Mammary epithelial cell (primary cell): ENCODE measurements at regions of chr10 and their contacts with region 1.

Region 1: GRCh38 chr10:43689955-43690771 is 41.5 kb upstream of the ZNF32 start:
- DNase-seq: peak; percentile 59
- H3K4me3 ChIP-seq: peak overlapping the region; percentile 13 to 40 (median 36)
- H3K27ac ChIP-seq: no peak overlapping the region
- H3K4me1 ChIP-seq: peaks cover 7% of the 10 kb centered on the region
- H3K27me3 ChIP-seq: no peaks in the 10 kb centered on the region
- CTCF ChIP-seq: peak; percentile 31 to 69

Region 2: DNA sequence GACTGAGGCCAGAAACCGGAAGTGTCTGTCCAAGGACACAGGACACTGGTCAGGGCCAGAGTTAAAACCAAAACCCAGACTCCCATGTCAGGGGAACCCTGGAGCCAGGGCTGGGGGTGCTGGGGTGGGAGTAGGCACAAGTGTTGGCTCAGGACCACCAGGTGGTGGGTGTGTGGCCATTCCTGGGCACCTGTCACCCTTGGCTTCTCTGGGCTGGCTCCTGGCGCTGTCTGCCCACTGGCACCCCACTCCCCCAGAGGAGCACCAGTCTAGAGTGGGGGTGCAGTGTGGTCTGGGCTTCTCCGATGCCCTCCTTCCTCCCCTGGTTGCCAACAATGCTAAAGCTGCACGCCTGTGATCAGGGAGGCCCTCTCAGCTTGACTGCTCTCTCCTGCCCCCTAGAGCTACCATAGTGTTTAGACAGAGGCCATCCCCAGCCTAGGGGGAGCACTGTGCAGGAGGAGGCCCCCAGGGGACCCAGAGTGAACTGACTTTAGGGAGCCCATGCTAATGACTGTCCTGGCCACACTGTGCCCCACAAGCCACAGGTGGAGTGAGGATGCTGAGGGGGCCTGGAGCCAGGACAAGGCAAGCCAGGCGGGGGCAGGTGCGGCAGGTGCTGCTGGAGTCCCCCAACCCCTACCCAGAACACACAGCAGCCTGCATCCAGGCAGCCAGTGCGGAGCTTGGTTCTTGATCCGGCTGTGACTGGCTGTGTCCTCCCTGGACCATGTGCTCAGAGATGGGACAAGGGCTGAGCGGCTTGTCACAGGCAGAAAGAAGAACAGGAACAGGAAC is 434.3 kb before region 1 on chr10:
- CTCF ChIA-PET with region 1: no interaction called
- dilution Hi-C with region 1: no loop called
- in situ Hi-C with region 1: no loop called
- intact Hi-C with region 1: no loop called
- DNase-seq: no peak
- H3K4me3 ChIP-seq: no peak overlapping the region
- H3K27ac ChIP-seq: no peak overlapping the region
- H3K4me1 ChIP-seq: peaks cover 5% of the 10 kb centered on the region
- H3K27me3 ChIP-seq: peaks cover 3% of the 10 kb centered on the region
- CTCF ChIP-seq: peak; percentile 53 to 64

Region 3: GRCh38 chr10:44046605-44047004 is 356.4 kb after region 1 on chr10:
- CTCF ChIA-PET with region 1: interaction called, 4 read pairs
- dilution Hi-C with region 1: no loop called
- in situ Hi-C with region 1: no loop called
- intact Hi-C with region 1: loop called (anchors 1 kb)
- DNase-seq: peak; percentile 73
- H3K4me3 ChIP-seq: no peak overlapping the region
- H3K27ac ChIP-seq: no peak overlapping the region
- H3K4me1 ChIP-seq: no peaks in the 10 kb centered on the region
- H3K27me3 ChIP-seq: no peaks in the 10 kb centered on the region
- CTCF ChIP-seq: peak in 1 of 2 donors; percentile 23

Region 4: GRCh38 chr10:44310762-44311562 is 620.8 kb after region 1 on chr10:
- CTCF ChIA-PET with region 1: no interaction called
- dilution Hi-C with region 1: no loop called
- in situ Hi-C with region 1: no loop called
- intact Hi-C with region 1: loop called (anchors 5 kb)
- DNase-seq: peak; percentile 11
- H3K4me3 ChIP-seq: no peak overlapping the region
- H3K27ac ChIP-seq: no peak overlapping the region
- H3K4me1 ChIP-seq: no peaks in the 10 kb centered on the region
- H3K27me3 ChIP-seq: no peaks in the 10 kb centered on the region
- CTCF ChIP-seq: peak in 1 of 2 donors; percentile 9

Region 5: DNA sequence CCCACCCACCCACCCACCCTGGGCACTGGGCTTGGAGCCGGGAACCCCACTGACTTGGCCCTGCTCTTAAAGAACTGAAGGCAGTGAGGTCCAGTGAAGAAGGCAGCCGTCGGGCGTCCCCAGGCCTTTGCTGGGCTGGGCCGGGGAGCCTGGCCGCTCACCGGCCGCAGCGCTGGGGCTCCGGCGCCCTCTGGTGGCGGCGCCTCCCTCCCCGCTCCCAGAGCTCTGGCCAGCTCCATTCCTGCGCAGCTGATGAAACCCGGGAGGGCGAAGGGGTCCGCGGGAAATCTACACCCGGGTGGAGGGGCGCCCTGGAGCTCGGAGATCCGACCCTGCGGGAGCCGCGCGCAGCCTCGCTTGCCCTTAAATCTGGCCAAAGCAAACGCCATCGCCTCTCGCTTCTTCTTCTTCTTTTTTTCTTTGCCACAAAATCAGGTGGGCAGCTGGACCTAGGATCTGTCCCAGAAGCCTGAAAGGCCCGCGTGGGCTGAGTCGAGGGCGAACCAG is 696.4 kb after region 1 on chr10:
- CTCF ChIA-PET with region 1: no interaction called
- dilution Hi-C with region 1: no loop called
- in situ Hi-C with region 1: no loop called
- intact Hi-C with region 1: loop called (anchors 5 kb)
- DNase-seq: peak; percentile 14
- H3K4me3 ChIP-seq: no peak overlapping the region
- H3K27ac ChIP-seq: no peak overlapping the region
- H3K4me1 ChIP-seq: no peaks in the 10 kb centered on the region
- H3K27me3 ChIP-seq: peaks cover 7% of the 10 kb centered on the region
- CTCF ChIP-seq: peak; percentile 24 to 72

Region 6: GRCh38 chr10:44857363-44858016 is 1167.3 kb after region 1 on chr10:
- CTCF ChIA-PET with region 1: no interaction called
- dilution Hi-C with region 1: loop called (anchors 25 kb)
- in situ Hi-C with region 1: no loop called
- intact Hi-C with region 1: loop called (anchors 2 kb)
- DNase-seq: peak; percentile 14
- H3K4me3 ChIP-seq: no peak overlapping the region
- H3K27ac ChIP-seq: no peak overlapping the region
- H3K4me1 ChIP-seq: no peaks in the 10 kb centered on the region
- H3K27me3 ChIP-seq: no peaks in the 10 kb centered on the region
- CTCF ChIP-seq: peak; percentile 95 to 98

Region 7: DNA sequence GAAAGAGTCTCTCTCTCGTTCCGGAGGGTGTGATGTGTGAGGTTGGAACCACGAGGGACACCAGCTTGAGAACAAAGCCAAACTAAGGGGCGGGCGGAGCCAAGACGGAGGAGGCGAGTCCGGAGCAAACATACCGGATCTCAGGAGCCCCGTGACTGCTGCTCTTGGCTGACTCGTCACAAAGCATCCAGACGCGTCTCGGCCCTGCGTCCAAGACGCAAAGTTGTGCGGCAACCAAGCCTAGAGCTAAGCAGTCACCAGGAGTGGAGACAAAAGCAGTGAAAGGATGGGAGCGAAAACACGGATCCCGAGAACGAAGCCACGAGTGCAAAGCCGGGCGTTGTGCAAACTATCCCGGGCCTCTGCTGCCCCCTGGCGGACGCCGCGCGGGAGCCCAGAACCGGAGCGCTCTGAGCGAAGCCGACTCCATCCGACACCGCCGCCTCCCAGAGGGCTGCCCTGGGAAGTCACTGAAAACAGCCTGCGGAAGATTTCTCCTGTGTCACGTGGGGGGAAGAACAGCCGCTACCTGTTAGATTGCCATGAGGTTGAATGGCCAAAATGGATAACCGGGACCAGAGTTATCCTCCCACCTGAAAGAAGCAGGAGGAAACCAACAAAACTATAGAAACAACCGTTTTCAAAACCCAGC is 1174.6 kb after region 1 on chr10:
- CTCF ChIA-PET with region 1: no interaction called
- dilution Hi-C with region 1: loop called (anchors 25 kb)
- in situ Hi-C with region 1: no loop called
- intact Hi-C with region 1: loop called (anchors 2 kb)
- DNase-seq: peak; percentile 69
- H3K4me3 ChIP-seq: peak overlapping the region; percentile 24 to 62 (median 58)
- H3K27ac ChIP-seq: no peak overlapping the region
- H3K4me1 ChIP-seq: peaks cover 15% of the 10 kb centered on the region
- H3K27me3 ChIP-seq: no peaks in the 10 kb centered on the region
- CTCF ChIP-seq: peak; percentile 78 to 93